ENCODE measurements at regions of chr4 and their contacts with region 1.

Region 1: GRCh38 chr4:87938746-87939145 is 36.8 kb upstream of the SPP1 start:
- DNase-seq: no peak
- ATAC-seq: no peak
- H3K4me3 ChIP-seq: no peak overlapping the region
- H3K27ac ChIP-seq: no peak overlapping the region
- H3K4me1 ChIP-seq: no peaks in the 10 kb centered on the region
- H3K27me3 ChIP-seq: no peaks in the 10 kb centered on the region

Region 2: GRCh38 chr4:87363567-87363966 is 575.2 kb before region 1 on chr4:
- intact Hi-C with region 1: no loop called
- DNase-seq: no peak
- ATAC-seq: no peak
- H3K4me3 ChIP-seq: no peak overlapping the region
- H3K27ac ChIP-seq: no peak overlapping the region
- H3K4me1 ChIP-seq: no peaks in the 10 kb centered on the region
- H3K27me3 ChIP-seq: no peaks in the 10 kb centered on the region

Region 3: GRCh38 chr4:87805788-87806370 is 132.9 kb before region 1 on chr4:
- intact Hi-C with region 1: no loop called
- DNase-seq: no peak
- ATAC-seq: no peak
- H3K4me3 ChIP-seq: no peak overlapping the region
- H3K27ac ChIP-seq: no peak overlapping the region
- H3K4me1 ChIP-seq: no peaks in the 10 kb centered on the region
- H3K27me3 ChIP-seq: no peaks in the 10 kb centered on the region

Region 4: DNA sequence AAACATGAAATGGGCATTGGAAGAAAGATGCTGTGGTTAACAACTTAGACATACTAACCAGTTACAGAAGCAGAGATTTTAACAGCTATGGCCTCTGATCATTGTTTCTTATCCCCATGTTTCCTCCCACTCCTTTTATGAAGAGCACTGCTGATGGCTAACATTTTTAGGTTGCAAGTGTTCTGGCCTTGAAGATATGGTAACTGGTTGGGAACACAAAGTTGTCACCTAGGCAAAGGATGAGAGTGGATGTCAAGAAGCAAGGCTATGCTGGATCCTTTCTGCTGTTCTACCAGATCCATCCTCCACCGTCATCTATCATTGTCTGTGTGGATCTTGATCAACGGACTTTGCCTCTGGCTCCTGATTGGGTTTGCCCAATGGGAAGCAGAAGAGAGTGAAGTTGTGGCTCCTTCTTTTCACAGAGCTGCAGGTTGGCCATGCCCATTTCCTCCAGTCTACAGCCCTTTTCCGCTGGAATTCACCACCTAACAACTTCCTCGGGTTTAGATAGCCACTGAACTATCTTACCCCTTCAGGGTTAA is 12.1 kb before region 1 on chr4:
- intact Hi-C with region 1: loop called in 2 of 4 experiments (anchors 1 kb)
- DNase-seq: no peak
- ATAC-seq: no peak
- H3K4me3 ChIP-seq: no peak overlapping the region
- H3K27ac ChIP-seq: no peak overlapping the region
- H3K4me1 ChIP-seq: no peaks in the 10 kb centered on the region
- H3K27me3 ChIP-seq: no peaks in the 10 kb centered on the region

Measured in right cardiac atrium (tissue), 5 donors.